ENCODE measurements at regions of chr12 and their contacts with region 1.

Region 1: DNA sequence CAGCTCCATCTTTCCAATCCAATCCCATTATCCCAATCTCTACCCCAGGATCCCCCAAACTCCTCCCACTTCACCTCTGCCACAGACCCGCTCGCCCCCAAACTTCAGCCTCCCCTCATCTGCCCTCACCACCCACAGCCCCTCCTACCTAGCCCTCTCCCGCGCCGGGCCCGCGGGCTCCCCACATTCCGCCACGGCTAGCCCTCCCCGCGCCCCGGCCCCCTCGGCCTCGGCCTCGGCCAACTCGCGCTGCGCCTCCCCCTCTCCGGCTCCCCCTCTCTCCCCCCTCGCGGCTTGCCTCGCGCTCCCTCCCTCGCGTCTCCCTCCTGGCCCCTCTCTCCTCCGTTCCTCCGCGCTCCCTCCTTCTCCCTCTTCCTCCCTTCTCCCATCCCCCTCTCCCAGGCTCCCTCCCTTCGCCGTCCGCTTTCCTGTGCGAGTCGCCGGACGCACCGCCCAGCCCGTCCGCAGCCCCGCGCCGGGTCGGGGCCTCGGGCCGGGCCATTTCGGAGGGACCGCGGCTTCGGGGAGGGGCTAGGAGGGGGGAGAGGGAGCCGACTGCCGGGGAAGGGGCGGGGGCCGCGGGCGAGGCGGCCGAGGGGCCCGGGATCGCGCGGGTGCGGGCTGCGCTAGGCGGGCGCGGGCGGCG is at the start of gene ATN1:
- DNase-seq: no peak
- H3K4me3 ChIP-seq: peak within 1 kb of the TSS; percentile 80 to 96 (median 84)
- H3K27ac ChIP-seq: peak within 1 kb of the TSS; percentile 91 to 99 (median 98)
- H3K4me1 ChIP-seq: peaks cover 53 to 81% (median 56%) of the 10 kb centered on the region in 3 donors
- H3K27me3 ChIP-seq: no peaks in the 10 kb centered on the region
- CTCF ChIP-seq: no peak
- POLR2A ChIP-seq: peak in 2 of 4 donors; percentile 30 to 48
- total RNA-seq, gene ATN1: 12.2 to 28.8 (median 22.2) TPM

Region 2: DNA sequence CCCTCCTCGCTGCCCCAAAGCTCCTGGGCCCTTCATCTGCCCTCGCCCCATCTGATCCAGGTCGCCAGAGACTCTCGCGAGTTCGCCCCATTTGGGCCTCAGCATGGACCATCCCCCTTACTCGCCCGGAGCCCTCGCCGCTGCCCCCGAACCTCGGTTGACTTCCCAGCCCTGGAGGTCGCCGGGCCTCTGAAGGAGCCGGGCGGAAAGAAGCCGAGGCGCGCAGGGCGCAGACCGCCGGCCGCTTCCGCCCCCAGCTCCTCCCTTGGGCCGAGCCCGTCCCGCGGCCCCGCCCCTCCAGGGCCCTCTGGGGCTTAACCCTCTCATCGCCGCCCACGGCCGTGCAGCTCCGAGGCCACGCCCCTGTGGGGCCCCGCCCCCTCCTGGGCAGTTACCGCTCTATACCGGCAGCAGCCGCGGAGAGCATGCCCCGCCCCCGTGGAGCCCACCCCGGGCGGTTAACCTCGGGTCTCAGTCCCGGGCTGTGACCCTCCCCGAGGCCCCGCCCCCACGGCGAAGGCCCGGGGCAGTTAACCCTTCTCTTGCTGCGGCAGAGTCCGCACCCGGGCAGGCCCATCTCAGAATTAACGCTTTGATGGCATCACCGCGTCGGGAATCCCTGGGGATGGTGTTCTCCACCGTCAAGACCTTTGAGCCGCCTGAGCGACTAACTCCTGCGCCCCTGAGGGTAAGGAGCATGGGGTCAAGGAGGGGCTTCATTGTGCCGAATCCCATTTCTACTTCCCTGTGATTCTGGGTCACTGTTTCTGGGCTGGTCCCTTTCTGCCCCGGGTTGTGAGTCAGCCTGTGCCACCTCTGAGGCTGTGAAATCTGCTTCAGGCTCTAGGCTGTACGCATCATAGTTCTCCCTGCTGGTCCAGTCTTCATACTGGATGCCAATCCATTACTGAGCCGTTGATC is 54.1 kb before region 1 on chr12 and contains the start of gene SPSB2:
- intact Hi-C with region 1: loop called (anchors 10 kb)
- DNase-seq: peak; percentile 78
- H3K4me3 ChIP-seq: peak within 1 kb of the TSS; percentile 53 to 89 (median 79)
- H3K27ac ChIP-seq: peak within 1 kb of the TSS; percentile 78 to 94 (median 92)
- H3K4me1 ChIP-seq: peaks cover 32 to 61% (median 35%) of the 10 kb centered on the region in 3 donors
- H3K27me3 ChIP-seq: no peaks in the 10 kb centered on the region
- CTCF ChIP-seq: peak in 2 of 6 experiments; percentile 20 to 27
- POLR2A ChIP-seq: peak in 1 of 4 donors; percentile 84
- total RNA-seq, gene SPSB2: 4.3 to 15.8 (median 7.9) TPM

Measured in esophagus squamous epithelium (tissue), 5 donors.